IMR-90 (cell line): ENCODE measurements at regions of chr9 and their contacts with region 1.

Region 1: GRCh38 chr9:17462869-17463464 is 115.9 kb upstream of the SH3GL2 start:
- DNase-seq: peak; percentile 78
- ATAC-seq: peak; percentile 82
- H3K4me3 ChIP-seq: no peak overlapping the region
- H3K27ac ChIP-seq: no peak overlapping the region
- H3K4me1 ChIP-seq: no peaks in the 10 kb centered on the region
- H3K27me3 ChIP-seq: no peaks in the 10 kb centered on the region
- CTCF ChIP-seq: peak; percentile 83
- POLR2A ChIP-seq: no peak
- RAD21 ChIP-seq: peak; percentile 87

Region 2: GRCh38 chr9:16530669-16531642 is 932.0 kb before region 1 on chr9:
- CTCF ChIA-PET with region 1: no interaction called
- POLR2A ChIA-PET with region 1: no interaction called
- dilution Hi-C with region 1: no loop called
- in situ Hi-C with region 1: no loop called
- intact Hi-C with region 1: loop called (anchors 10 kb)
- DNase-seq: peak; percentile 61
- ATAC-seq: peak; percentile 57
- H3K4me3 ChIP-seq: no peak overlapping the region
- H3K27ac ChIP-seq: peak overlapping the region; percentile 38; the same call in 1 of the 2 replicates
- H3K4me1 ChIP-seq: peaks cover 11% of the 10 kb centered on the region
- H3K27me3 ChIP-seq: no peaks in the 10 kb centered on the region
- CTCF ChIP-seq: no peak
- POLR2A ChIP-seq: no peak
- RAD21 ChIP-seq: no peak

Region 3: DNA sequence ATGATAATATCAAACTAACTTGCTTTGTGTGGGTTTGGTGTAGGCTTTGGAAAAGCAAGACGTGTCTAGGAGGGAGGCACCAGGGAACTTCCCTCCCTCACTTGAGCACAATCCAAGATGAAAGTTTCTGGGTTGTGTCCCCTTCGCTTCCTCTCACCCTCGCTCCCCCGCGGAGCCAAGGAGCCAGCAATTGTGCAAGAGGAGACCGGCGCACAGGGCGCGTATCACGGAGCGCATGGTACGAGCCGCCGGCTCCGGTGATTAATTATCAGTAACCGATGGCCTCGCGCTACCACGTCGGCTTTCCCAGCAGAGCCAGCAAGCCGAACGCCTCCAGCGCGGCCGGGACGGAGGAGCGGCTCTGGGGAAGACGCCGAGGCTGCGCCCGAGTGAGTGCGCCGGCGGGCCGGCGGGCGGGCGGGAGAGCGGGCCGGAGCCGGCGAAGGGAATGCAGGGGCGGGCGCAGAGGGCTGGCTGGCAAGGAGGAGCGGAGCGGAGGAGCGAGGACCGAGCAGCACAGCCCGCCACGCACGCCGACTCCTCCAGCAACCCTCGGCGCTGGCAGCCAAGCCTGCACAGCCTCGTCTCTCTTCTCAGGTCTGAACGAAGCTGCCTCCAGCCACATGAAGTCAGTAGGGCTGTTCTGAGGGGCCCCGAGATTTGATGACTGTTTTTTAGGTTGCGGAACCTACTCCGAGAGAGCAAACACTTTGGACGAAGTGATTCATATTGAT is 736.1 kb before region 1 on chr9:
- CTCF ChIA-PET with region 1: no interaction called
- POLR2A ChIA-PET with region 1: no interaction called
- dilution Hi-C with region 1: no loop called
- in situ Hi-C with region 1: no loop called
- intact Hi-C with region 1: loop called (anchors 10 kb)
- DNase-seq: peak; percentile 83
- ATAC-seq: peak; percentile 83
- H3K4me3 ChIP-seq: peak overlapping the region; percentile 62
- H3K27ac ChIP-seq: peak overlapping the region; percentile 97
- H3K4me1 ChIP-seq: peaks cover 12% of the 10 kb centered on the region
- H3K27me3 ChIP-seq: no peaks in the 10 kb centered on the region
- CTCF ChIP-seq: no peak
- POLR2A ChIP-seq: peak; percentile 72
- RAD21 ChIP-seq: no peak

Region 4: GRCh38 chr9:17116400-17116837 is 346.5 kb before region 1 on chr9:
- CTCF ChIA-PET with region 1: interaction called, 6 read pairs
- POLR2A ChIA-PET with region 1: no interaction called
- dilution Hi-C with region 1: no loop called
- in situ Hi-C with region 1: loop called (anchors 25 kb)
- intact Hi-C with region 1: loop called (anchors 1 kb)
- DNase-seq: peak; percentile 54
- ATAC-seq: peak; percentile 77
- H3K4me3 ChIP-seq: no peak overlapping the region
- H3K27ac ChIP-seq: no peak overlapping the region
- H3K4me1 ChIP-seq: no peaks in the 10 kb centered on the region
- H3K27me3 ChIP-seq: no peaks in the 10 kb centered on the region
- CTCF ChIP-seq: peak; percentile 50
- POLR2A ChIP-seq: no peak
- RAD21 ChIP-seq: peak; percentile 39